A673 (cell line): ENCODE measurements at regions of chr19 and their contacts with region 1.

Region 1: DNA sequence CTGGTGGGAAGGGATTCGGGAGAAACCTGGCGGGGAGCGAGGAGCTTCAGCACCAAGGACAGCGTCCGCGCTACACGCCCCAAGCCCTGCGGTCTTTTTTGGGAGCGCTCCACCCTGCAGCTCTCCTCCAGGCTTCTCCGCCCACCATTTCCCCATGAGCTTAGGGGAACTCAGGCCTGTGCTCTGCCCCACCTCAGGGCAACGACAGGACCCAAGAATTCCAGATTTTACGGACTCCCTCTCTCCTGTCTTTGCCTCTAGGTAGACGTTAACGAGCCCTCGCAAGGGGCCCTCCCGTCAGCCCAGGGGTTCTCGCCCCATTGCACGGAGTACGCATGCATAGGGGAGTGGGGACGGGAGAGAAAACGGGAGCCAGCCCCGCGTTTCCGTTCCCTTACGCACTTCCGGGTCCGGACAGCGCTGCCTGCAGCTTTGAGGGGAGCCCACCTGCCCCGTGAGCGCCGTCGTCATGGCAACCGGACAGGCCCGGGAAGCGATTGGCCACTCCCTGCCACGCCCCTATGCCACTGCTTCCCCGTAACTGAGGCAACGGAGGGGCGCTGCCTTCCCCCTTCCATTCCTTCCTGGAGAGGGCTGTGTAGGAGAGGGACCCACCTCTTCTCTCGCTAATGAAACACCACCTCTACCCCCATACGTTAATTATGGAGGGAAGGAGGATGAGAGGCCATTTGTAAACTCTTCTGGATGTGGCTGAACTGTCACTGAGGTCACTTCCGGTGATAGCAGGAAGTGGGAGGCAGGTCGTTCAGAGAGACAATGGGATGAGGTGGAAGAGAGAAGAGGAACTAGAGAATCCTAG is 20.8 kb downstream of the NOVA2 start:
- DNase-seq: peak; percentile 82
- H3K4me3 ChIP-seq: peak overlapping the region; percentile 16
- H3K27ac ChIP-seq: no peak overlapping the region
- H3K4me1 ChIP-seq: peaks cover 6% of the 10 kb centered on the region
- H3K27me3 ChIP-seq: peaks cover 8% of the 10 kb centered on the region
- CTCF ChIP-seq: no peak

Region 2: GRCh38 chr19:45862564-45863334 is 90.1 kb before region 1 on chr19 and contains the start of gene SYMPK:
- CTCF ChIA-PET with region 1: no interaction called
- POLR2A ChIA-PET with region 1: no interaction called
- intact Hi-C with region 1: no loop called
- DNase-seq: peak; percentile 99
- H3K4me3 ChIP-seq: peak within 1 kb of the TSS; percentile 67
- H3K27ac ChIP-seq: peak within 1 kb of the TSS; percentile 91
- H3K4me1 ChIP-seq: peaks cover 6% of the 10 kb centered on the region
- H3K27me3 ChIP-seq: peaks cover 41% of the 10 kb centered on the region
- CTCF ChIP-seq: no peak
- total RNA-seq, gene SYMPK: 85.5 and 92.4 TPM in 2 replicates

Region 3: DNA sequence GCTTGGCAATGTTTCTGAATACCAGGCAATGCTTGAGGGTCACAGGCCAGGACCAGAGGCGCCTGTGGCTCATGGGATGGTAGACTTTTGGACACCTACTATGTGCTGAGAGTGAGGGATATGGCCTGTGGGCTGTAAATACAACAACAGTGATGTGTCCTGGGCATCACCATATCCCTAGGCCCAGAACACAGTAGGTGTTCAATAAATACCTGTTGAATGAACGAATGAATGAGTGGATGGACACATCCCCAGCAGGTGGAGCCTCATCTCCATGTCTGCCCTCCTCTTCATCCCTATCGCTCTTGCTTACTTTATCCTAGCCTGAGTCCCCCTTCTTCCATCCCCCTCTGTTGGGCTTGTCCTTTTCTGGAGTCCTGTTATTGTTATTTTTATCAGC is 21.8 kb before region 1 on chr19:
- CTCF ChIA-PET with region 1: no interaction called
- POLR2A ChIA-PET with region 1: interaction called, 14 read pairs
- intact Hi-C with region 1: no loop called
- DNase-seq: no peak
- H3K4me3 ChIP-seq: no peak overlapping the region
- H3K27ac ChIP-seq: no peak overlapping the region
- H3K4me1 ChIP-seq: peaks cover 4% of the 10 kb centered on the region
- H3K27me3 ChIP-seq: peaks cover 24% of the 10 kb centered on the region
- CTCF ChIP-seq: no peak